Activated T-helper 1 cell treated with anti-CD3 and anti-CD28 coated beads, Interleukin-12 subunit alpha, Interleukin-12 subunit beta, Interleukin-2, Interleukin-4 antibody, amounts not matched to agents 30 ng/mL and 10 ng/mL and 1 ng/mL, durations not matched to agents 14 hours and 24 hours and 36 hours (primary cell): ENCODE measurements at regions of chr5 and their contacts with region 1.

Region 1: DNA sequence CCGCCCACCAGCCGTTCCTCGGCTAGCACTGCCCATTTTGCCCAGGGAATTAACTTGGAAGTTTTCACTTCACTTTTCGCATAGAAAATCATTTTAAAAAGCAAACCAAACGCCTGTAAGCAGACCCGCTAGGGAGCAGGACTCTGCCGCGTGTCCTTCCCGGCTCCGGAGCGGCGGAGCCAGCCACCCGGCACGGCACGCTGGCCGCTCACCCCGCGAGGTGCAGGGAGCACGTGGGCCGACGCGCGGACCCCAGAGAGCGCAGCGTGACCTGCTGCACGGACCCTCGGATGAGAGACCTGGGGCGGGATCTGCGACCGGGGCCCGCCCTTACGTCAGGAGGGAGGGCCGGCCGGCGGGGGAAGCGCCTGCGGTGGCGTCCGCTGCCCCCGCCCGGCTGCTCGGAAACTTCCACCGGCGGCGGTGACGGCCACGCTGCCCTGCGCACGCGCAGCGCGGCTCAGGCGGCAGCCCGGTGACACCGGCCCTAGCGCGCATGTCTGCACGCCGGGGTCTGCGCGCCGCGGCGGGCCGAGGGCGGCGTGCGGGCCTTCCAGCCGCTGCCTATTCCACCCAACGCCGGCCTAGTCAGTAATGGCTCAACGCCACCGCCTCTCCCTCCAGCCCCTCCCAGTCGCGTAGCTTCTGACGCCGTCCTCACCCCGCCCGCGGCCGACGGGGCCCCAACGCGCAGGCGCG is 506 bp upstream of the TENT4A start:
- DNase-seq: peak; percentile 97
- H3K4me3 Mint-ChIP-seq: peak overlapping the region; percentile 88
- H3K27ac Mint-ChIP-seq: peak overlapping the region; percentile 95
- H3K4me1 Mint-ChIP-seq: peaks cover 41% of the 10 kb centered on the region
- H3K27me3 Mint-ChIP-seq: no peaks in the 10 kb centered on the region

Region 2: DNA sequence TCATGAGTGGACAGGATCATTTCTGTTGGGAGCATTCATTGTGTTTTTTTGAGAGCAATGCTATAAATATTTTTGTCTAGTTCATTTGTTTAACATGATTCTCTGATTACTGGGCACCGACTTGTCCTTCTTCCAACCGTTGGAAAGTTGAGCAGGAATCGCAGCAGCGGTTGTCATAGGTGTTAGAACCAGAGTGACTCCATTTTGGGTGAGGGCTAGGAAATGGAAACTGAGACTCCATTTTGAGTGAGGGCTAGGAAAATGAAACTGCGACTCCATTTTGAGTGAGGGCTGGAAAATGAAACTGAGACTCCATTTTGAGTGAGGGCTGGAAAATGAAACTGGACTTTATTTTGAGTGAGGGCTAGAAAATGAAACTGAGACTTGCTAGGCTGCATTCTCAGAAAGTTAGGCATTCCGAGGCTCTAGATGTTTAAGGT is 1189.6 kb before region 1 on chr5:
- intact Hi-C with region 1: loop called (anchors 10 kb)
- DNase-seq: peak; percentile 43
- H3K4me3 Mint-ChIP-seq: peak overlapping the region; percentile 22
- H3K27ac Mint-ChIP-seq: peak overlapping the region; percentile 61
- H3K4me1 Mint-ChIP-seq: peaks cover 32% of the 10 kb centered on the region
- H3K27me3 Mint-ChIP-seq: no peaks in the 10 kb centered on the region

Region 3: DNA sequence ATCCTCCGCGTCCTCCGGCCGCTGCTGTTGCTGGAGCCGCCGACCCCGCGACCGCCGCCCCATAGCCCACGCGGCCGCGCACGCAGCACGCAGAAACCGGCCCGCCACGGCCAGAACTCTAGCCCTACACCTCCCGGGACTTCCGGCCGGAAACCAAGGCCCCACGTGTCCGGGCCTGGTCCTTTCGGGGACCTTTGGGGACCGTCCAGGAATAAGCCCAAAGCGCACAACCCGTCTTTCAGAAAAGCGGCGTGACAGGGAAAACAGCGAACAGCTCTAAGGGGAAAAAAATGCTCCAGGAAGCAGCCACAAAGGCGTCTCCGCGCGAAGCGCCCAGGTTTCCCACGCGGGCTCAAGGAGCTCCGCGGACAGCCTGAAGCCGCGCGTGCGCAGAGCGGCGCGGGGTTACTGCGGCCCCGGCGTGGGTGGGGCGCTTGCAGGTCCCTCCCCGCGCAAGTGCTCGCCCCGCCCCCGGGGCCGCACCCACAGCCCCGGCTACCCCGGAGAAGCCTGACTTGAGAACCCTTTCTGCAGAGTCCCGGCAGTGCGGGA is 79.7 kb before region 1 on chr5 and contains the starts of genes NSUN2 and SRD5A1:
- intact Hi-C with region 1: loop called (anchors 1 kb)
- DNase-seq: peak; percentile 90
- H3K4me3 Mint-ChIP-seq: peak within 1 kb of the TSS; percentile 98
- H3K27ac Mint-ChIP-seq: peak within 1 kb of the TSS; percentile 97
- H3K4me1 Mint-ChIP-seq: peaks cover 57% of the 10 kb centered on the region
- H3K27me3 Mint-ChIP-seq: no peaks in the 10 kb centered on the region
- total RNA-seq, gene NSUN2: 146 and 149 TPM in 2 replicates
- total RNA-seq, gene SRD5A1: 13.8 and 14.0 TPM in 2 replicates

Region 4: DNA sequence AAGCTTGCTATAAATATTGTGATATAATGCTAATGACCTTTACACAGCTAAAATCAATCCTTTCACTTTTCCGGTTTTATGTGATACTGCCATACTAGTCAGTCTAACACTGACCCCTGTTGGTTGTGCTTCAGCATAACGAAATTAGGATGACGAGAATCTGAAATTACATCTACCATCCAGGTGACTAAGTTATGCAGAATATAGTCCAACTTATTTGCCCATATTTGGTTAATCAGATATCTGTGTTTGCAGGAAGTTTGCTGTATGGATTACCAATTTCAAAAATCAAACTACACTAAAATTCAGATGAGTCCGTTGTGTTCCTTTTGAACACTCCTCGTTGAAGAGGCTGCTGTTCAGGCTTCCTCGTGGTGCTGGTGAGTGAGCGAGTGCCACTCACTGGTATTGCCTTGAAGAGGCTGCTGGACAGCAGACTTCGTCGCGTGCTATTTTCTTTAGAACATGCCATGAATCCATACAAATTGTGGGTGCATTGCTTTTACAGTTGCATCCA is 33.0 kb after region 1 on chr5:
- intact Hi-C with region 1: loop called (anchors 1 kb)
- DNase-seq: no peak
- H3K4me3 Mint-ChIP-seq: no peak overlapping the region
- H3K27ac Mint-ChIP-seq: no peak overlapping the region
- H3K4me1 Mint-ChIP-seq: no peaks in the 10 kb centered on the region
- H3K27me3 Mint-ChIP-seq: no peaks in the 10 kb centered on the region

Region 5: GRCh38 chr5:6943197-6944112 is 230.7 kb after region 1 on chr5:
- intact Hi-C with region 1: no loop called
- DNase-seq: no peak
- H3K4me3 Mint-ChIP-seq: no peak overlapping the region
- H3K27ac Mint-ChIP-seq: no peak overlapping the region
- H3K4me1 Mint-ChIP-seq: no peaks in the 10 kb centered on the region
- H3K27me3 Mint-ChIP-seq: no peaks in the 10 kb centered on the region

Region 6: GRCh38 chr5:7650755-7651154 is 938.0 kb after region 1 on chr5:
- intact Hi-C with region 1: no loop called
- DNase-seq: no peak
- H3K4me3 Mint-ChIP-seq: no peak overlapping the region
- H3K27ac Mint-ChIP-seq: no peak overlapping the region
- H3K4me1 Mint-ChIP-seq: no peaks in the 10 kb centered on the region
- H3K27me3 Mint-ChIP-seq: no peaks in the 10 kb centered on the region